ENCODE measurements at regions of chr2 and their contacts with region 1.

Region 1: GRCh38 chr2:43219383-43220228 is 6.8 kb downstream of the ZFP36L2 start:
- DNase-seq: peak; percentile 89 to 97 (median 96)
- ATAC-seq: peak; percentile 84 to 85
- H3K4me3 ChIP-seq: peak overlapping the region; percentile 47
- H3K27ac ChIP-seq: peak overlapping the region; percentile 100
- H3K4me1 ChIP-seq: peaks cover 17% of the 10 kb centered on the region
- H3K27me3 ChIP-seq: no peaks in the 10 kb centered on the region

Region 2: DNA sequence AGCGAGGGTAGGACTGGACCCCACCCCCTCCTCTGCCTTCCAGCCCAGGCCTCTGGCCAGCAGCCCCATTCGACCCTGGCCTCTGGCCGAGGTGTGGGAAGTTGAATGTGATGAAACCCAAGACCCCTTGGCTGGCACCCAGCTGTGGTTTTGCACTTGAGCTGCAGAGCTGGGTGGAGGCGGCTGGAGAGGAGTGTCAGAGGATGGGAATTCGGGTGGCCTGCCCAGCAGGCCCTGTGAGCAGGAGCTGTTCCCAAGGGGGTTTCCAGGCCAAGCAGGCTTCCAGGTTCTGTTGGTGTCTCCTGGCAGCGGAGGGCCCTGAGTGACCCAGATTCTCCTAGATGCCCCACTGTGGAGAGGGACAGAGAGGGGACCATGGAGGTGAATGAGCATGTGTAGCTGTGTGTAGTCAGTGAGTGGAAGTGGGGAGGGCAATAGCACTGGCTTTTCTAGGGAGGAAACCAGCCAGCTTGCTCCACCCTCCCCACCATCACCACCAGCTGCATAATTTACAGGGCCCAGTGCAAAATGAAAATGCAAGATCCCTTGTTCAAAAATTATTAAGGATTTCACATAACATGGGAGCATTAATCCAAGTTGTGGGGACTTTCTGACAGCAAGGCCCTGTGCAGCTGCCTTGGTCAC is 255.0 kb before region 1 on chr2:
- intact Hi-C with region 1: loop called in 1 of 4 experiments (anchors 5 kb)
- DNase-seq: peak; percentile 92 to 95 (median 94)
- ATAC-seq: peak; percentile 49 to 59
- H3K4me3 ChIP-seq: no peak overlapping the region
- H3K27ac ChIP-seq: peak overlapping the region; percentile 47
- H3K4me1 ChIP-seq: peaks cover 26% of the 10 kb centered on the region
- H3K27me3 ChIP-seq: no peaks in the 10 kb centered on the region

Region 3: DNA sequence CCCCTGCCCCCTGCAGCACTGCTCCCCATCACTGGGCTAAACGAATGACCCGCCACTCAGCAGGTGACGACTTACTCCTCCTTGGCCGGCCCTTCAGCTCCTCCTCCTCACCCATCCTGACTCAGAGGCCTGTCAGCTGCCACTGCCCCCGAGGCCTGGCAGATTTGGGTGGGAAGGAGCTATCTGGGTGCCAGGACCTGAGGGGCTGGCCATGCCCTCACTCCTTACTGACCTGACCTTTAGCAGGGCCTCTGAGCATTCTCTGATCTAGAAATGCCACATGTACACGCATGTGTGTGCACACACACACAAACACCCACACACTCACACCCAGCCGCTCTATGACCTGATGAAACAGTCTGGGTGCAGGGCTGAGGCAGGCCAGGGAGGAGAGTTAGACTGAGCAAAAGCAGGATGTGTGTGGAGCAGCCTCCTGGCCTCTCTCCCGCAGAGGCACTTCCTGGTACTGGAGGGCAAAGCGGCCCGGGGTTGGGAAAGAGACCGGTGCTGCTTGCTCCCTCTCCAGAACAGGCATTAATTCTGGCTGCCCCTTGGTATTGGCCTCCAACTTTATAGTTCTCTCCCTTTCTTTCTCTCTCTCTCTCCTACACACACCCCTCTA is 61.2 kb before region 1 on chr2:
- intact Hi-C with region 1: loop called in 2 of 4 experiments (anchors 5 to 10 kb)
- DNase-seq: peak; percentile 69 to 88 (median 86)
- ATAC-seq: peak; percentile 60 to 66
- H3K4me3 ChIP-seq: no peak overlapping the region
- H3K27ac ChIP-seq: peak overlapping the region; percentile 82
- H3K4me1 ChIP-seq: peaks cover 14% of the 10 kb centered on the region
- H3K27me3 ChIP-seq: no peaks in the 10 kb centered on the region

Region 4: DNA sequence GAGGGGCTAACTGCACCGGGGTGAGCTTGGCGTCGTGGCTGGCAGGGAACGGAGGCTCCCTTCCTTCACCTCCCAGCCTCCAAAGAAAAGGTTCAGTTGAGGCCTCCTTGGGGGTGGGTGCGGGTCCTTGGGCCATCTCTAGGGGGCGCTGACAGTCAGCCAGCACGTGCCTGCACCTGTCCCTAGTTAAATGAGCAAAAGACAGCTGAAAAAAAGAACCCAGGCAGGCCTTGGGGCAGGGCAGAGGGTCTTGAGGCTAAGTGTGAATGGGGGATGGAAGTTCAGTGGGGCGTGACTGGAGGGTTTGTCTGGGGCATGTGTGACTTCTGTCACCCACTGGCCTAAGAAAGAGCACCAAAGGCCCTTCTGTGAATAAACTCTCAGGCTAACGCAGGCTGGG is 49.6 kb before region 1 on chr2:
- intact Hi-C with region 1: loop called in 1 of 4 experiments (anchors 10 kb)
- DNase-seq: peak in 1 of 3 donors; percentile 71
- ATAC-seq: no peak
- H3K4me3 ChIP-seq: no peak overlapping the region
- H3K27ac ChIP-seq: no peak overlapping the region
- H3K4me1 ChIP-seq: peaks cover 11% of the 10 kb centered on the region
- H3K27me3 ChIP-seq: no peaks in the 10 kb centered on the region

Measured in right cardiac atrium (tissue), 5 donors.